A549 (cell line): ENCODE measurements at regions of chr11 and their contacts with region 1.

Region 1: GRCh38 chr11:34680918-34681554 is 60.1 kb downstream of the EHF start:
- DNase-seq: peak; percentile 71 to 90
- ATAC-seq: peak; percentile 76 to 82; a peak in 5 of 6 replicates
- H3K4me3 ChIP-seq: no peak overlapping the region
- H3K27ac ChIP-seq: peak overlapping the region; percentile 75 to 86
- H3K4me1 ChIP-seq: peaks cover 55% of the 10 kb centered on the region
- CTCF ChIP-seq: no peak
- EP300 ChIP-seq: peak; percentile 26 to 32; a peak in 1 of 5 replicates
- POLR2A ChIP-seq: no peak
- RAD21 ChIP-seq: 0 out of 5 replicates have a peak, but pooled peaks of 1 of the 2 experiments have one; percentile 14

Region 2: GRCh38 chr11:34667810-34668582 is 13.0 kb before region 1 on chr11:
- CTCF ChIA-PET with region 1: interaction called, 12 read pairs
- POLR2A ChIA-PET with region 1: no interaction called
- DNase-seq: peak in 1 of 2 experiments; percentile 84
- ATAC-seq: peak; percentile 19 to 90; a peak in 4 of 6 replicates
- H3K4me3 ChIP-seq: no peak overlapping the region
- H3K27ac ChIP-seq: peak overlapping the region; percentile 60 to 74
- H3K4me1 ChIP-seq: peaks cover 38% of the 10 kb centered on the region
- CTCF ChIP-seq: no peak
- EP300 ChIP-seq: peak in 1 of 2 experiments; percentile 20; a peak in 1 of 5 replicates
- POLR2A ChIP-seq: no peak
- RAD21 ChIP-seq: no peak